Activated T-helper 1 cell treated with anti-CD3 and anti-CD28 coated beads, Interleukin-12 subunit alpha, Interleukin-12 subunit beta, Interleukin-2, Interleukin-4 antibody, amounts not matched to agents 30 ng/mL and 10 ng/mL and 1 ng/mL, durations not matched to agents 14 hours and 24 hours and 36 hours (primary cell): ENCODE measurements at regions of chr18 and their contacts with region 1.

Region 1: DNA sequence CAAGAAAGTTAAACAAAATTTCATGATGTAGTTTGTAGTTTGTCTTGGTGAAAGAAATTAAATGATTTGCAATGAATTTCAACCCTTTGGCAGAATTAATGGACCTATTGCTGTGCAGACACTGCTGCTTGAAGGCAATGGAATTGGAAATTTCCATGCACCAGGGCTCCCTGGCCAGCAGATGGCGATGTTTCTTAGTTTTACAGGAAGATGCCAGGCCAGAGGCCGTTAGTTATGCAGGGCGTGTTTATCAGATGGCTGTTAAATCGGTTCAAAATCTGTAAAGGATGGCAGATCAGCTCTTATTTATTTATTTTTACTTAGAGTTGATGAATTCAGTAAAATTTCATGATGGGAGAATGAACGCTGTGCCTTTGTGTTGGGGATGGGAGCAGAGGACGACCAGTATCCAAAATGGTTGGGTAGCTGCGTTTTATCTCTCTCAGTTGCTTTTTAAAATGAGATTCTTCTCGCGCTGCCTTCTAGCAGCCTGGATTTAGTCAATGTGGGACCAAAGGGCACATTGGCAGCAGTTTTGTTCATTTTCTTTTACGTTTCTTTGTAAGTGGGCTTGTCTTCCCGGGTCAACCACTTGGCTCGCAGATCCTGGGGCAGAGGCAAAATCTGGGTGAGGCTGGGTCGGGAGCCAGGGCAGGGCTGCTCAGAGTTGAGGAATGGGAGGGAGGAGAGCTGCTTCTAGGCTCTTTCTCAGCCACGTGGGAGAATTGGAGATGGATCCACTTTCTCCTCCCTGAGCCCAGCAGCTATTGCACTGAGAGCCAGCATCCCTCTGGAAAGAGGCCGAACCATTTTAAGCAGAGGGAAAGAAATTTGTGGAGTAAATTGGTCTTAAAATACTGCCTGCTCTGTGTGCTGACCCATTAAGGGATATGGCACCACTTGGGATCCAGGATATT is 344.0 kb downstream of the PIK3C3 start:
- DNase-seq: peak; percentile 13
- H3K4me3 Mint-ChIP-seq: no peak overlapping the region
- H3K27ac Mint-ChIP-seq: no peak overlapping the region
- H3K4me1 Mint-ChIP-seq: no peaks in the 10 kb centered on the region
- H3K27me3 Mint-ChIP-seq: no peaks in the 10 kb centered on the region

Region 2: GRCh38 chr18:42114310-42114943 is 184.6 kb before region 1 on chr18:
- intact Hi-C with region 1: loop called (anchors 2 kb)
- DNase-seq: peak; percentile 38
- H3K4me3 Mint-ChIP-seq: no peak overlapping the region
- H3K27ac Mint-ChIP-seq: peak overlapping the region; percentile 49
- H3K4me1 Mint-ChIP-seq: peaks cover 15% of the 10 kb centered on the region
- H3K27me3 Mint-ChIP-seq: peaks cover 9% of the 10 kb centered on the region